ENCODE measurements at regions of chr6 and their contacts with region 1.

Region 1: GRCh38 chr6:135145063-135145800 is 35.9 kb upstream of the MYB start:
- DNase-seq: peak; percentile 74
- H3K4me3 ChIP-seq: peak overlapping the region; percentile 7
- H3K27ac ChIP-seq: peak overlapping the region; percentile 44
- H3K4me1 ChIP-seq: peaks cover 50% of the 10 kb centered on the region
- CTCF ChIP-seq: peak; percentile 99

Region 2: GRCh38 chr6:134698228-134698627 is 447.0 kb before region 1 on chr6:
- CTCF ChIA-PET with region 1: no interaction called
- POLR2A ChIA-PET with region 1: no interaction called
- intact Hi-C with region 1: no loop called
- DNase-seq: no peak
- H3K4me3 ChIP-seq: no peak overlapping the region
- H3K27ac ChIP-seq: no peak overlapping the region
- H3K4me1 ChIP-seq: no peaks in the 10 kb centered on the region
- CTCF ChIP-seq: no peak

Region 3: DNA sequence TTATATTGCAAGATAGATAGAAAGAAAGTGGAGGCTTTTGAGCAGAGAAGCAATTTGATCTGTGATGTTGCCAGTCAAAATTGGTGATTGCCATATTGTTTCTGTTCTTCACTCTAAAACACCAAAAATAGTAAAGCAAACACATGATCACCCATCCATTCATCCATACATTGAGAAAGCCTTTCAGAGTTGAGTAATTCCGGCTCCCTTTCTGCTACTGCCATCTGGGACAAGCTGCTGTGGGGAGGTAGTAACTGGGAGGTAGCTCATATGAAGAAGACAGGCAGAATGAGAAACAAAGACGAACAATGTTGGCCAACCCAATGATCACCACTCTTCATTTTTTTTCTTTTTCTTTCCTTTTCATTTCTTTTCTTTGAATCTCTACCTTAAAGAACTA is 39.5 kb before region 1 on chr6:
- CTCF ChIA-PET with region 1: no interaction called
- POLR2A ChIA-PET with region 1: interaction called, 11 read pairs
- intact Hi-C with region 1: no loop called
- DNase-seq: peak; percentile 15
- H3K4me3 ChIP-seq: no peak overlapping the region
- H3K27ac ChIP-seq: no peak overlapping the region
- H3K4me1 ChIP-seq: peaks cover 45% of the 10 kb centered on the region
- CTCF ChIP-seq: no peak

Region 4: GRCh38 chr6:135132776-135133175 is 12.5 kb before region 1 on chr6:
- CTCF ChIA-PET with region 1: interaction called, 3 read pairs
- POLR2A ChIA-PET with region 1: interaction called, 17 read pairs
- intact Hi-C with region 1: no loop called
- DNase-seq: no peak
- H3K4me3 ChIP-seq: no peak overlapping the region
- H3K27ac ChIP-seq: no peak overlapping the region
- H3K4me1 ChIP-seq: peaks cover 12% of the 10 kb centered on the region
- CTCF ChIP-seq: no peak

Region 5: GRCh38 chr6:135162678-135163439 is 17.6 kb after region 1 on chr6:
- CTCF ChIA-PET with region 1: interaction called, 3 read pairs
- POLR2A ChIA-PET with region 1: interaction called, 6 read pairs
- intact Hi-C with region 1: loop called (anchors 2 kb)
- DNase-seq: peak; percentile 69
- H3K4me3 ChIP-seq: peak overlapping the region; percentile 38
- H3K27ac ChIP-seq: peak overlapping the region; percentile 13
- H3K4me1 ChIP-seq: peaks cover 15% of the 10 kb centered on the region
- CTCF ChIP-seq: peak; percentile 92

Region 6: DNA sequence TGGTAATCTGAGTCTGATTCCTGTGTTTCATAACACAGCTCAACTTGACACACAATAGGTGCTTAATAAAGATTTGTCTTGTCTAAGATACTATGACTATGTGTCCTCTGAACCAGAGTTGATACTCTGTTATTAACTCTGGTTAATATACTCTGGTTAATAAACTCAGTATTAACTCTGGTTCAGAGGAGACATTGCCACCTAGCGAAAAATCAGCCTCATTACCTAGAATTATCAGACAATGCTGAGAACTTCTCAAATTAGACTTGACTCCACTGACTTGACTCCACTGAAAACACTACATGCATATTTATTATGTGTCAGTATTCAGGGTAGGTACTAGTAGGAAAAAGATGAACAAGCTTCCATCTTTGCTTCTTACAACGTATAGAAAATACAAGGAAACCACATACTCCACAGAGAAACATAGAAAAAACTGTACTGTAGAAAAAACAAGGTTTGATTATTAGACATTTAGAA is 278.5 kb after region 1 on chr6:
- CTCF ChIA-PET with region 1: interaction called, 3 read pairs
- POLR2A ChIA-PET with region 1: interaction called, 9 read pairs
- intact Hi-C with region 1: loop called (anchors 1 kb)
- DNase-seq: peak; percentile 77
- H3K4me3 ChIP-seq: no peak overlapping the region
- H3K27ac ChIP-seq: peak overlapping the region; percentile 5
- H3K4me1 ChIP-seq: peaks cover 11% of the 10 kb centered on the region
- CTCF ChIP-seq: peak; percentile 96

Region 7: GRCh38 chr6:135438907-135439535 is 293.8 kb after region 1 on chr6:
- CTCF ChIA-PET with region 1: no interaction called
- POLR2A ChIA-PET with region 1: interaction called, 5 read pairs
- intact Hi-C with region 1: loop called (anchors 1 kb)
- DNase-seq: peak; percentile 73
- H3K4me3 ChIP-seq: no peak overlapping the region
- H3K27ac ChIP-seq: no peak overlapping the region
- H3K4me1 ChIP-seq: peaks cover 25% of the 10 kb centered on the region
- CTCF ChIP-seq: peak; percentile 95